ENCODE measurements at regions of chr5 and their contacts with region 1.

Region 1: GRCh38 chr5:169583424-169584204 is at the start of gene SPDL1:
- DNase-seq: peak; percentile 95 to 97
- H3K4me3 ChIP-seq: peak within 1 kb of the TSS; percentile 84
- H3K4me3 Mint-ChIP-seq: peak within 1 kb of the TSS; percentile 94
- H3K27ac Mint-ChIP-seq: peak within 1 kb of the TSS; percentile 97
- H3K4me1 ChIP-seq: no peaks in the 10 kb centered on the region; the same call in 1 of the 2 replicates
- H3K4me1 Mint-ChIP-seq: peaks cover 28% of the 10 kb centered on the region
- H3K27me3 ChIP-seq: no peaks in the 10 kb centered on the region
- H3K27me3 Mint-ChIP-seq: no peaks in the 10 kb centered on the region
- CTCF ChIP-seq: no peak
- total RNA-seq, gene SPDL1: 57.8 and 60.0 TPM in 2 replicates

Region 2: DNA sequence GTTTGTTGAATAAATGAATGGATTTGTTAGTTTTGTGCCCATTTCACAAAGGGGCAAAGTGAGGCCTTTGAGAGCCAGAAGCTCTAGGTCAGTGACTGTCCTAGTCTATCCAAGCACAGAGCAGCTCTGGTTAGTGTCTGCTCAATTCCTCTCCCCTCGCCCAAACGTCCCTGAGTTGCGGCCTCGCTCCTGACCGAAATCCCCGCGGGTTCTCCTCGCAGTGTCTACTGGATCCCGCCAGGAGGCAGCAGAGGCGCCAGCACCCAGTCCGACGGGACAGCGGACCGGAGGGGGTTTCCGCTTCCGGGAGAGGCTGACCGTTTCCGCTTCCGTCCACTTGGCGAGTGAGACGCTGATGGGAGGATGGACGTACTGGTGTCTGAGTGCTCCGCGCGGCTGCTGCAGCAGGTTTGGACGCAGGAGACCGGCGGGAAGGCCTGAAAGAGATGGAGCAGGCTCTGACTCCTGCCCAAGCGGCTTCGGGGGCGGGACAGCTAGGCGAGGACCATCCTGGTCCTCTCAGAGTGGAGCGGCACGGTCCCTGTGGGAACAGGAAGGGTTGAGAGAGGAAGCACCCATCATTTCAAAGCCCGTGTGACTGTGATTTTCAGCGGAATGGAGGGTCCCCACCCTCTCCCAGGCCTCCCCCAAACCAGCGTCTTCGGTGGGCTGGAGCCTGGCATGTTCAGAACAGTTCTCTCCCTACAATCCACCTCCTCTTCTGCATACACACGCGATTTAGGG is 1097.3 kb before region 1 on chr5 and contains the start of gene RARS1:
- CTCF ChIA-PET with region 1: no interaction called
- POLR2A ChIA-PET with region 1: no interaction called
- intact Hi-C with region 1: loop called (anchors 10 kb)
- DNase-seq: peak; percentile 94 to 95
- H3K4me3 ChIP-seq: peak within 1 kb of the TSS; percentile 93
- H3K4me3 Mint-ChIP-seq: peak within 1 kb of the TSS; percentile 98
- H3K27ac Mint-ChIP-seq: peak within 1 kb of the TSS; percentile 86
- H3K4me1 ChIP-seq: peaks cover 10% of the 10 kb centered on the region
- H3K4me1 Mint-ChIP-seq: peaks cover 8% of the 10 kb centered on the region
- H3K27me3 ChIP-seq: no peaks in the 10 kb centered on the region
- H3K27me3 Mint-ChIP-seq: no peaks in the 10 kb centered on the region
- CTCF ChIP-seq: peak; percentile 93 to 96
- total RNA-seq, gene RARS1: 124 and 129 TPM in 2 replicates

Region 3: DNA sequence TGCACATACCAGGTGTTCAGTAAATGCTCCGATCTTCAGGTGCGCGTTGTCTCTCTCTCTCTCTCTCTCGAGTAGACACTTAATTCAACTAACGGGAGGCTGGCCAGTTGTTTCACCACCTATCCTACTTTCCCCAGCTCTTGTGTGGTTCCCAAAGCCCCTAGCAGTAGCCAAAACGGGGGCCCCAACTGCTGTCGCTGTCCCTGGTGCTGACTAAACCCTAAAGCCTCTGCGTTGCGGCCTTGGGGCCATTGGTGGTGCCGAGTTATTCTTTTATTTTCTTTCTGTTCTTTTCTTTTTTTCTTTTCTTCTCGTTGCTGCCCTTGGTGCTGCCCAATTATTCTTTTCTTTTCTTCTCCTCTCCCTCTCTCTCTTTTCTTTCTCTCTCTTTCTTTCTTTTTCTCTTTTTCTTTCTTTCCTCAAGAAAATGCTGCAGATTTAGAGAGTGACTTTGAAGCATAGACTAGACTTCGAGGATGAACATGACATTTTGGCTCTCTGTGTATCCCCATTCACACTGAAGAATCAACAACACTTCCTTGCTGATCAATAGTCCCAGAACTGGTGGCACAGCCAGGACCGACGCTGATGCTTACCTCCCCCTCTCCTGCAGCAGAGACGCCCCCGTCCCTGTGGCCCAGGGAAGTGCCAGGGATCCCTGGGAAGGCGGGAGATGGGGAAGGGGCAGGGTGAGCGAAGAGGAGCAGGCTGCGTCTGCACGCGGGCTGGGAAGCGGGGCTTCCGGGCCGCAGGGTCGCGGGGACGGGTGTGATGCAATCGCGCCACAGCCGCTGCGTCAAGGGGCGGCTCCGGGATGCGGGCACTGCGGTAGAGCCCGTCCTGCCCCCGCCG is 1054.9 kb before region 1 on chr5 and contains the start of gene FBLL1:
- CTCF ChIA-PET with region 1: no interaction called
- POLR2A ChIA-PET with region 1: interaction called, 11 read pairs
- intact Hi-C with region 1: no loop called
- DNase-seq: peak in 1 of 2 experiments; percentile 45
- H3K4me3 ChIP-seq: no peak within 1 kb of the TSS
- H3K4me3 Mint-ChIP-seq: no peak within 1 kb of the TSS
- H3K27ac Mint-ChIP-seq: no peak within 1 kb of the TSS
- H3K4me1 ChIP-seq: no peaks in the 10 kb centered on the region; the same call in 1 of the 2 replicates
- H3K4me1 Mint-ChIP-seq: peaks cover 6% of the 10 kb centered on the region
- H3K27me3 ChIP-seq: no peaks in the 10 kb centered on the region
- H3K27me3 Mint-ChIP-seq: no peaks in the 10 kb centered on the region
- CTCF ChIP-seq: no peak
- total RNA-seq, gene FBLL1: not detected in 2 replicates

Region 4: GRCh38 chr5:168947212-168947868 is 636.3 kb before region 1 on chr5:
- CTCF ChIA-PET with region 1: interaction called, 3 read pairs
- POLR2A ChIA-PET with region 1: no interaction called
- intact Hi-C with region 1: loop called (anchors 1 kb)
- DNase-seq: peak; percentile 71 to 77
- H3K4me3 ChIP-seq: no peak overlapping the region
- H3K4me3 Mint-ChIP-seq: no peak overlapping the region
- H3K27ac Mint-ChIP-seq: peak overlapping the region; percentile 80
- H3K4me1 ChIP-seq: peaks cover 34% of the 10 kb centered on the region
- H3K4me1 Mint-ChIP-seq: peaks cover 33% of the 10 kb centered on the region
- H3K27me3 ChIP-seq: no peaks in the 10 kb centered on the region
- H3K27me3 Mint-ChIP-seq: no peaks in the 10 kb centered on the region
- CTCF ChIP-seq: peak; percentile 86 to 88

Region 5: GRCh38 chr5:169610606-169611005 is 27.0 kb after region 1 on chr5:
- CTCF ChIA-PET with region 1: no interaction called
- POLR2A ChIA-PET with region 1: no interaction called
- intact Hi-C with region 1: no loop called
- DNase-seq: no peak
- H3K4me3 ChIP-seq: no peak overlapping the region
- H3K4me3 Mint-ChIP-seq: no peak overlapping the region
- H3K27ac Mint-ChIP-seq: no peak overlapping the region
- H3K4me1 ChIP-seq: no peaks in the 10 kb centered on the region
- H3K4me1 Mint-ChIP-seq: no peaks in the 10 kb centered on the region
- H3K27me3 ChIP-seq: no peaks in the 10 kb centered on the region; the same call in 1 of the 2 replicates
- H3K27me3 Mint-ChIP-seq: peaks cover 23% of the 10 kb centered on the region
- CTCF ChIP-seq: no peak

Measured in Caco-2 (cell line).